Sigmoid colon (tissue), 7 donors: ENCODE measurements at regions of chr5 and their contacts with region 1.

Region 1: GRCh38 chr5:108748401-108749127 is 867 bp downstream of the FER start:
- DNase-seq: peak; percentile 100
- H3K4me3 ChIP-seq: peak overlapping the region; percentile 72 to 95 (median 89)
- H3K27ac ChIP-seq: peak overlapping the region; percentile 92 to 98 (median 96)
- H3K4me1 ChIP-seq: peaks cover 0 to 44% (median 22%) of the 10 kb centered on the region in 4 donors
- H3K27me3 ChIP-seq: no peaks in the 10 kb centered on the region
- CTCF ChIP-seq: no peak
- EP300 ChIP-seq: no peak
- POLR2A ChIP-seq: peak; percentile 99

Region 2: DNA sequence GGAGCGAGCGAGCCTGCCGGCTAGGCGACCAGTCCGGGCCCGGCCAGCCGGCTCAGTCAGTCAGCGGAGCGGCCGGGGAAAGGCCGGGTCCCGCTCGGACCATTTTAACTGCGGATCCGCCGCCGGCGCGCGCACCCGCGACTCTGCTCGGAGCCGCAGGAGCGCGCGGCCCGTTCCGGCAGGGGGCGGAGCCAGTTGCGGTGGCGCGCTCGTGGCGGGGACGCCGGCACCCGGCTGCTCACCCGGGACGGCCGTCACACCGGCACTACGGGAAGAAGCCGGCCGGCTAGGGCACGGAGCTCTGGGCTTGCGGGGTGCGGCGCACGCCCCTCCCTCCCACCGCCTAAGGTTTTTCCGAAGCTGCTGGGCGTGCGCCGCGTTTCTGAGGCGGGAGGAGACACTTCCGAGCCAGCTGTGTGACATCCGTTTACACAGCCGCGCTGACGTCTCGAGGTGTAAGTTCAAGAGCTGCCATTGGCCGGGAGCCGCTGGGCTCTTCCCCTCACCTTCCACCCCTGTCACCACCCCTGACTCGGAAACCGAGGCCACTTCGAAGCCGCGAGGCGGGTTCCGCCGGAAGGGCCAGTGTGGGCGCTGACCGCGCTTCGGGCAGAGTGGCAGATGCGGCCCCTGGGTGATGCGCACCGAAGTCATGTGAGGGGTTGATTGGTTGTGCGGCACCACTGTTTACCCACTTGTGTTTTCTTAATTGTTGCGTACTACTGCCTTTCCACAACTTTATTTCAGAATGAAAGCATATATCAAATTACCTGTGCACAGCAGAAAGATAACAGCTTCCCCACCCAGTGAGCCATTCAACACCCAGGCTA is 366.4 kb before region 1 on chr5 and contains the start of gene FBXL17:
- intact Hi-C with region 1: loop called (anchors 5 kb)
- DNase-seq: peak; percentile 97
- H3K4me3 ChIP-seq: peak within 1 kb of the TSS; percentile 84 to 96 (median 92)
- H3K27ac ChIP-seq: peak within 1 kb of the TSS; percentile 98 to 99 (median 99)
- H3K4me1 ChIP-seq: peaks cover 0 to 31% (median 20%) of the 10 kb centered on the region in 4 donors
- H3K27me3 ChIP-seq: no peaks in the 10 kb centered on the region
- CTCF ChIP-seq: no peak
- EP300 ChIP-seq: no peak
- POLR2A ChIP-seq: peak; percentile 64 to 69
- total RNA-seq, gene FBXL17: 16.6 to 22.5 (median 20.0) TPM

Region 3: DNA sequence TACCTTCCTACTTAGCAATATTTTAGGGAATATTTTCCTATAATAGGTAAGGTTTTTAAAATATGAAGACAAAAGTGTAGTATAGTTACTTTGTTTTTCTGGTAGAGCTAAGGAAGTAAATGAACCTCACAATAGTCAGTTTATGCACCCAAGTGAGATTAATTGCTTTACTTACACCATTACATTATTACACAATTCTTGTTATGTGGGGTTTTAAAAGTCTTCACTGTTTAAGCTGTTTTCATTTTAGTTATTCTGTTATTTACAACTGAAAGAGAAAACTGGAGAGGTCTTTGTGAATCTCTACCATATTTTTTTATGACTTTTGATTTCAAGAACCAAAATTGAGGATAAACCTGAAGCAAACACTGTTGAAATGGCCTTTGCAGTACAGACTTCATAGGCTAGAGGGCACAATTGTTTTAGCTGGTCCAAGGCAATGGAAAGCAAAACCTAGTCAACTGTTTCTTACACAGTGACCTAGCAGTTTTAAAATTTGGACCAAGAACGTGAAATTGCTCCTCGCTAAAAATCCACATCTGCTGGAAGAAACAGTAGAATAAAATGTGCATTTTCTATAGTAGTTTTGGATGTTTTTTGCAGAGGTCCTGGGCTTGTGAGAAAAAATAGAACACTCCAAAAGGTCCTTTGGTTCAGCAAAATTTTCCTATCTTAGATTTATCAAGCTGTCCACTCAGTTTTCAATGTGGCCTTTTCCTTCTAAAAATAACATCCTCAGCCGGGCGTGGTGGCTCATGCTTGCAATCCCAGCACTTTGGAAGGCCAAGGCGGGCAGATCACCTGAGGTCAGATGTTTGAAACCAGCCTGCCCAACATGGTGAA is 67.3 kb before region 1 on chr5:
- intact Hi-C with region 1: loop called (anchors 2 kb)
- DNase-seq: no peak
- H3K4me3 ChIP-seq: peak overlapping the region in 1 of 4 donors; percentile 28
- H3K27ac ChIP-seq: peak overlapping the region; percentile 44 to 75 (median 50)
- H3K4me1 ChIP-seq: no peaks in the 10 kb centered on the region
- H3K27me3 ChIP-seq: no peaks in the 10 kb centered on the region
- CTCF ChIP-seq: peak; percentile 69 to 90 (median 84)
- EP300 ChIP-seq: no peak
- POLR2A ChIP-seq: no peak

Region 4: DNA sequence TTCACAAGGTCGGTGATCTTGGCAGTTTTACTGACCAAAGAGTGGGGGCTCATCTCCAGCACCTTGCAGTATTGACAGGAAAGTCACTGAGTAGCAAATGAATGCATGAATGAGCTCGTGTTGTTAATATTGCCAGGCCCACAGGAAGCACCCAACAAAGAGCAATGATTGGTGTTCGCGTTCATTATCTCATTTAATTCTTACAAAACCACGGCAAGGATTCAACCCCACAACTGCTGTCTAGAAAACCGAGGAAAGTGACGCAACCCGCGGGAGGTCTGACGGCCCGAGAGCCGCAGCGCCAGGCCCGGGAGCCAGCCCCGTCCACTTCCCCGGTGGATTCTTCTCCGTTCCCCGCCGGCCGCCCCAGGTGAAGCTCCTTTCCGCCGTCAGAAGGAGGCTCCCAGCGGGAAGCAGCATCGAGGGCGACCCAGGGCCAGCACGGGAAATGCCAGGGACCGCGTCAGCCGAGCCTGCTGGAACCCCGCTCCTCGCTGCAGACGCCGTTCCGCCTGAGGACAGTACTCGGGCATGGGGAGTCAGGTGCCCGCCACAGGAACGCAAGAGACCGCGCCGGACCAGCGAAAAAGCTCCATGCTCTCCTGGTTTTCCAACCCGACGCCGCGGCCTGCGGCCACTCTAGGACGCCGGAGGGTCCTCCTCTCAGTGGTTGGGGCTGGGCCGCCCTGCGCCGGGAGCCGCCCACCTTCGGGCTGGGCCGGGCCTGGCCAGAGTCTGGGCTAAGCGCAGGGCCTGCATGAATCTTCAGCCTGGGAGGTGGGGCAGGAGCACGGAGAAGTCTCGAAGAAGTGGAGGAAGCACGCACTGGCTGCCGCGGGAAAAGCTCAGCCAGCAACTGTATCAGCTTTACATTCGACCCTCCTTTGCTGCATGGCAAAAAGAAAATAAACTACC is 20.7 kb before region 1 on chr5:
- intact Hi-C with region 1: loop called (anchors 1 kb)
- DNase-seq: peak; percentile 96
- H3K4me3 ChIP-seq: peak overlapping the region; percentile 67 to 84 (median 73)
- H3K27ac ChIP-seq: peak overlapping the region; percentile 88 to 91 (median 89)
- H3K4me1 ChIP-seq: peaks cover 0 to 19% (median 4%) of the 10 kb centered on the region in 4 donors
- H3K27me3 ChIP-seq: no peaks in the 10 kb centered on the region
- CTCF ChIP-seq: no peak
- EP300 ChIP-seq: peak in 1 of 4 donors; percentile 17
- POLR2A ChIP-seq: peak; percentile 82 to 84

Region 5: GRCh38 chr5:108814551-108814950 is 66.0 kb after region 1 on chr5:
- intact Hi-C with region 1: loop called (anchors 5 kb)
- DNase-seq: no peak
- H3K4me3 ChIP-seq: peak overlapping the region in 1 of 4 donors; percentile 6
- H3K27ac ChIP-seq: peak overlapping the region in 3 of 4 donors; percentile 5 to 49 (median 48)
- H3K4me1 ChIP-seq: peaks cover 0 to 55% (median 34%) of the 10 kb centered on the region in 4 donors
- H3K27me3 ChIP-seq: no peaks in the 10 kb centered on the region
- CTCF ChIP-seq: no peak
- EP300 ChIP-seq: no peak
- POLR2A ChIP-seq: no peak

Region 6: GRCh38 chr5:109329333-109330237 is 581.0 kb after region 1 on chr5:
- intact Hi-C with region 1: loop called (anchors 10 kb)
- DNase-seq: no peak
- H3K4me3 ChIP-seq: no peak overlapping the region
- H3K27ac ChIP-seq: peak overlapping the region; percentile 66 to 83 (median 72)
- H3K4me1 ChIP-seq: peaks cover 0 to 52% (median 48%) of the 10 kb centered on the region in 4 donors
- H3K27me3 ChIP-seq: no peaks in the 10 kb centered on the region
- CTCF ChIP-seq: no peak
- EP300 ChIP-seq: no peak
- POLR2A ChIP-seq: no peak

Region 7: DNA sequence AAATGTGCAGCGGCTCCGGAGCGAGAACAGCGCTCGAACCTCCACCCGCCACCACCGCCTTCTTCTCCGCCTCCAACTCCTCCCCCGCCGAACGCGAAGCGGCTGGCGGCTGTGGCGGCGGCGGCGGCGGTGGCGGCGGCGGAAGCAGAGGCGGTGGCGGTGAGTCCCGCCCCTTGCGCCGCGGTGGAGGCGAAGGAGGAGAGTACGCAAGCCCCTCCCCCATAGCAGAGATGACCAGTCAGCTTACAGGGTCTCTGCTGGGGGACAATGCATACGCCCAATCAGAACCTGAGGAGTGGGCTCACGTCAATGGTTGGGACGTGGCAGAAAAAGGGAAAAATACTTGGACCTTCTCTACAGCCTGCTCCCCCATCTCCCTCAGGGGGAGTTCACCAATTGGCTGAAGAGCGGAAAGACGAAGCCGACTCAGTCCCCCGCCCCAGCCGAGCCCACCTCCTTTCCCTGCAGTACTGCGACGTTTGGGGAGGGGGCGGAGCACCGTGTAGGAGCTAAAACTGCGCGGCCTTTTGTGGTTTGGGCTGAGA is 661.4 kb after region 1 on chr5 and contains the start of gene PJA2:
- intact Hi-C with region 1: loop called (anchors 2 kb)
- DNase-seq: peak; percentile 100
- H3K4me3 ChIP-seq: peak within 1 kb of the TSS; percentile 70 to 89 (median 85)
- H3K27ac ChIP-seq: peak within 1 kb of the TSS; percentile 95 to 99 (median 98)
- H3K4me1 ChIP-seq: peaks cover 0 to 64% (median 56%) of the 10 kb centered on the region in 4 donors
- H3K27me3 ChIP-seq: no peaks in the 10 kb centered on the region
- CTCF ChIP-seq: peak in 2 of 4 experiments; percentile 29 to 32
- EP300 ChIP-seq: peak in 1 of 4 donors; percentile 58
- POLR2A ChIP-seq: peak; percentile 80 to 95
- total RNA-seq, gene PJA2: 163 to 213 (median 171) TPM